ENCODE measurements at regions of chr1 and their contacts with region 1.

Region 1: GRCh38 chr1:204506961-204507387 is 9.2 kb upstream of the MDM4 start:
- DNase-seq: peak; percentile 97
- H3K4me3 ChIP-seq: peak overlapping the region; percentile 32 to 94 (median 92)
- H3K27ac ChIP-seq: peak overlapping the region; percentile 76
- H3K4me1 ChIP-seq: peaks cover 34% of the 10 kb centered on the region
- H3K27me3 ChIP-seq: no peaks in the 10 kb centered on the region
- CTCF ChIP-seq: no peak
- POLR2A ChIP-seq: no peak

Region 2: GRCh38 chr1:204213668-204214662 is 293.0 kb before region 1 on chr1 and contains the start of gene GOLT1A:
- CTCF ChIA-PET with region 1: interaction called, 15 read pairs
- POLR2A ChIA-PET with region 1: no interaction called
- dilution Hi-C with region 1: no loop called
- intact Hi-C with region 1: loop called (anchors 5 kb)
- DNase-seq: peak; percentile 75
- H3K4me3 ChIP-seq: no peak within 1 kb of the TSS
- H3K27ac ChIP-seq: no peak within 1 kb of the TSS
- H3K4me1 ChIP-seq: no peaks in the 10 kb centered on the region
- H3K27me3 ChIP-seq: no peaks in the 10 kb centered on the region
- CTCF ChIP-seq: peak; percentile 75
- POLR2A ChIP-seq: no peak
- total RNA-seq, gene GOLT1A: not detected in 2 replicates

Region 3: DNA sequence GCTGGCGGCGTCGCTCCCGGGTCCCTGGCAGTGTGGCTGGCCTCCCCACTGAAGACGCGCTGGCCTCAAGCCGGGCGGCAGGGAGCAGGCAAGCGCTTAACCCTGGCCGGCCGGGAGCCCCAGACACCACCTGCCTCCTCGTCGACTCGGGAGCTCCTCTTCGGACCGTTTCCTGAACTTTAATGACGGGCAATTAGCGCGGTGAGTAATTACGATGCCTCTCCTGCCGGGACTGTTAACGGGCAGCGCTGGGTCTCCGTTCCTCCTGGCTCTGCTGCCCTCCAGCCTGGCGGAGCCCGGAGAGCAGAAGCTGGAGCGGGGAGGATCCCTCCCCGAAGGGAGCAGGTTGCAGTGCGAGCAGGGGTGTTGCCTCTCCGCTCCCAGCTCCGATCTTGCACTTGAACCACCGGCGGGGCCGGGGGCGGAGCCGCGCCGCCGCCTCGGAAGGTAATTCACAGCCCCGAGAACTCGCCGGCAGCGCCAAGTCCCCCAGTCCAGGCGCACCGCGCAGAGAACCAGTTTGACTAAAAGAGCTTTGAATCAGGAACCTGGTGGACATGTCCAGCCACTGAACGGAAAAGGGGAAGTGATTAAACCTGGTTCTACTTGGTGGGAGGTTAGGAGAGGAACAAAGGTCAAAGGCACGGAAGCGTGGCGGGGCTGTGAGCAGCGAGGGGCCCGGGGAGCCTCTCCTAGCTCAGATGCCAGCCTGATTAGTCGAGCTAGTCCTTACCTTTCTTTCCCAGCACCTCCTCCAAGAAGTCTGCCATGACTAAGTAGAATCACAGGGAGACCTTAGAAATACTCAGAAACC is 129.0 kb before region 1 on chr1:
- CTCF ChIA-PET with region 1: interaction called, 10 read pairs
- POLR2A ChIA-PET with region 1: no interaction called
- dilution Hi-C with region 1: no loop called
- intact Hi-C with region 1: no loop called
- DNase-seq: peak; percentile 45
- H3K4me3 ChIP-seq: peak overlapping the region; percentile 47 to 68 (median 57)
- H3K27ac ChIP-seq: peak overlapping the region; percentile 33
- H3K4me1 ChIP-seq: peaks cover 21% of the 10 kb centered on the region
- H3K27me3 ChIP-seq: no peaks in the 10 kb centered on the region
- CTCF ChIP-seq: no peak
- POLR2A ChIP-seq: no peak

Region 4: GRCh38 chr1:204431310-204432165 is 75.4 kb before region 1 on chr1:
- CTCF ChIA-PET with region 1: interaction called, 1,267 read pairs
- POLR2A ChIA-PET with region 1: interaction called, 7 read pairs
- dilution Hi-C with region 1: no loop called
- intact Hi-C with region 1: loop called (anchors 1 kb)
- DNase-seq: peak; percentile 75
- H3K4me3 ChIP-seq: no peak overlapping the region
- H3K27ac ChIP-seq: no peak overlapping the region
- H3K4me1 ChIP-seq: peaks cover 12% of the 10 kb centered on the region
- H3K27me3 ChIP-seq: no peaks in the 10 kb centered on the region
- CTCF ChIP-seq: peak; percentile 89 to 90
- POLR2A ChIP-seq: no peak

Region 5: GRCh38 chr1:204480515-204480914 is 26.5 kb before region 1 on chr1:
- CTCF ChIA-PET with region 1: interaction called, 32 read pairs
- POLR2A ChIA-PET with region 1: no interaction called
- dilution Hi-C with region 1: no loop called
- intact Hi-C with region 1: no loop called
- DNase-seq: no peak
- H3K4me3 ChIP-seq: no peak overlapping the region
- H3K27ac ChIP-seq: no peak overlapping the region
- H3K4me1 ChIP-seq: peaks cover 27% of the 10 kb centered on the region
- H3K27me3 ChIP-seq: no peaks in the 10 kb centered on the region
- CTCF ChIP-seq: no peak
- POLR2A ChIP-seq: no peak

Region 6: GRCh38 chr1:204801211-204801610 is 294.2 kb after region 1 on chr1:
- CTCF ChIA-PET with region 1: no interaction called
- POLR2A ChIA-PET with region 1: no interaction called
- dilution Hi-C with region 1: no loop called
- intact Hi-C with region 1: no loop called
- DNase-seq: no peak
- H3K4me3 ChIP-seq: no peak overlapping the region
- H3K27ac ChIP-seq: no peak overlapping the region
- H3K4me1 ChIP-seq: no peaks in the 10 kb centered on the region
- H3K27me3 ChIP-seq: peaks cover 2 to 3% of the 10 kb centered on the region in 2 experiments
- CTCF ChIP-seq: no peak
- POLR2A ChIP-seq: no peak

Measured in endothelial cell of umbilical vein (primary cell).